Activated CD4-positive, alpha-beta T cell treated with anti-CD3 and anti-CD28 coated beads, Interleukin-2, amount 10 ng/mL, durations not matched to agents 24 days and 14 days (primary cell): ENCODE measurements at regions of chr22 and their contacts with region 1.

Region 1: GRCh38 chr22:36481393-36482168 is at the start of gene TXN2:
- DNase-seq: peak; percentile 98
- H3K4me3 Mint-ChIP-seq: peak within 1 kb of the TSS; percentile 90
- H3K27ac Mint-ChIP-seq: peak within 1 kb of the TSS; percentile 87
- H3K4me1 Mint-ChIP-seq: peaks cover 19% of the 10 kb centered on the region
- H3K27me3 Mint-ChIP-seq: no peaks in the 10 kb centered on the region
- total RNA-seq, gene TXN2: 96.5 and 98.7 TPM in 2 replicates

Region 2: DNA sequence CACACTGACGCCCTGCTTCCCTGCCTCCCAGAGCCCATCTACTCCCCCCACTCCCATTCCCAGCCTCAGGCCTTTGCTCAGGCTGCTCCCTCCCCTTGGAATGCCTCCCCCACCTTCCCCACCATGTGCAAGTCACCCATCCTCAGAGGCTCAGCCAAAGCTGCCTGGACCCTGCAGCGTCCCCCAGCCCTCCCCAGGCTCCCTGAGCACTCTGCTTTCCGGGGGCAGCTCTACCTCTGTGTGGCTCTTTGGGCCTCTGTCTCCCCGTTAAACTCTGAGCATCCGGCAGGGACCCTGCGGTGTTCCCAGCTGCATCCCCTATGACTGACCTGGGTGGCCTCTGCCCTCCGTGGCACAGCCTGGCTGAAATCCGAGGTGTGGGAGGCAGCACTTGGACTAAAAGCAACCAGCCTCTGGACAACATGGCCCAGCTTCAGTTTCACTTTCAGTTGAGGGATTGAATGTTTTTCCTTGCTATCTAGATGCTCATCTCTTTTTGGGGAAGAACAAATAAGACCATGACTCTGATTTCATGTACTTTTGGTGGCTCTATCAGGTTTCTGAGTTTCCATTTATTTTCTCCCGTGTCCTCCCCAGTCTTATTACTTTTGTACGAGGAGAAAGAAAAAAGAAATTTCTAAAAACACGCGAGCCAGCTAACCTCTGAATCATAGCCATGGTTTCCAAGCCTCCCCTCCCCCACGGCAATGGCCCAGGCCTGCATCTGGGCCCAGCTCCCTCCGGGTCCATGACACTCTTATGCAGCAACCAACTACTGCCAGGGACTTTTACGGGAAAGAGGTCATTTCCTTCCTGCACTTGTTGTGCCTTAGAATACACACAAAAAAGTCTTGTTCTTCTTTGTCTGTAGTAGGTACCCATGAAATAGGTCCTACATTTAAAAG is 324.8 kb before region 1 on chr22:
- intact Hi-C with region 1: loop called (anchors 10 kb)
- DNase-seq: peak; percentile 86
- H3K4me3 Mint-ChIP-seq: peak overlapping the region; percentile 94
- H3K27ac Mint-ChIP-seq: peak overlapping the region; percentile 99
- H3K4me1 Mint-ChIP-seq: peaks cover 81% of the 10 kb centered on the region
- H3K27me3 Mint-ChIP-seq: no peaks in the 10 kb centered on the region

Region 3: GRCh38 chr22:36239401-36240171 is 242.0 kb before region 1 on chr22 and contains the start of gene APOL2:
- intact Hi-C with region 1: loop called (anchors 5 kb)
- DNase-seq: peak; percentile 96
- H3K4me3 Mint-ChIP-seq: peak within 1 kb of the TSS; percentile 91
- H3K27ac Mint-ChIP-seq: peak within 1 kb of the TSS; percentile 94
- H3K4me1 Mint-ChIP-seq: peaks cover 40% of the 10 kb centered on the region
- H3K27me3 Mint-ChIP-seq: peaks cover 2% of the 10 kb centered on the region
- total RNA-seq, gene APOL2: 52.0 and 58.6 TPM in 2 replicates

Region 4: DNA sequence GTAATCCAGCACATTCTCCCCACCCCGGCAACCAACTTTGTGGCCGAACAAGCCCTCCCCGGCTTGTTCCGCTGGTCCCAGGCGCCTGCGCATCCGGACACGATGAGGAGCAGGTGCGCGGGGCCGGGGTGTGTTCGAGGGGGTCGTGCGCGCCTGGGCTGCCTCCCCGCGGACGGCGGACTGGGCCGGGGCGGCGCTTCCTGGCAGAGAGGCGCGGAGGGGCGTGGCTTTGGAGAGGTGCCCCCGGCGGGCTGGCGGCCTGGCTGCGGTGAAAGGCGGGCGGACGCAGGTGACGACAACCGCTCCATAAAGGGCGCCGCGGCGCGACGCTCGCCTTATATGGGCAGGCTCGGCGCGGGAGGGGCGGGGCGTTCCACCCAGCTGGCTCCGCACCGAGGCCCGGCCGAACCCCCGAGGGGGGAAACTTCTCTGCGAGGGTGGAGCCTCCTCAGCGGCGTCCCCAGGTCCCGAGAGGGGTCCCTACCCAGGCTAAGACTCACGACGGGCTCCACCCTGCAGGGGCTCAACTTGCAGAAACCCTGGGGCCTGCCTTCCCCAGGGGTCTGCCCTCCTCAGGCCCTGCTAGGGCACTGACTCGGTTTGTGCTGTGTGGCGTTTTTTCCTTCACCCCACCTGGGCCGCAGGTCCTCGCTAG is 26.5 kb before region 1 on chr22:
- intact Hi-C with region 1: loop called (anchors 2 kb)
- DNase-seq: peak; percentile 98
- H3K4me3 Mint-ChIP-seq: peak overlapping the region; percentile 71
- H3K27ac Mint-ChIP-seq: peak overlapping the region; percentile 77
- H3K4me1 Mint-ChIP-seq: peaks cover 41% of the 10 kb centered on the region
- H3K27me3 Mint-ChIP-seq: no peaks in the 10 kb centered on the region

Region 5: DNA sequence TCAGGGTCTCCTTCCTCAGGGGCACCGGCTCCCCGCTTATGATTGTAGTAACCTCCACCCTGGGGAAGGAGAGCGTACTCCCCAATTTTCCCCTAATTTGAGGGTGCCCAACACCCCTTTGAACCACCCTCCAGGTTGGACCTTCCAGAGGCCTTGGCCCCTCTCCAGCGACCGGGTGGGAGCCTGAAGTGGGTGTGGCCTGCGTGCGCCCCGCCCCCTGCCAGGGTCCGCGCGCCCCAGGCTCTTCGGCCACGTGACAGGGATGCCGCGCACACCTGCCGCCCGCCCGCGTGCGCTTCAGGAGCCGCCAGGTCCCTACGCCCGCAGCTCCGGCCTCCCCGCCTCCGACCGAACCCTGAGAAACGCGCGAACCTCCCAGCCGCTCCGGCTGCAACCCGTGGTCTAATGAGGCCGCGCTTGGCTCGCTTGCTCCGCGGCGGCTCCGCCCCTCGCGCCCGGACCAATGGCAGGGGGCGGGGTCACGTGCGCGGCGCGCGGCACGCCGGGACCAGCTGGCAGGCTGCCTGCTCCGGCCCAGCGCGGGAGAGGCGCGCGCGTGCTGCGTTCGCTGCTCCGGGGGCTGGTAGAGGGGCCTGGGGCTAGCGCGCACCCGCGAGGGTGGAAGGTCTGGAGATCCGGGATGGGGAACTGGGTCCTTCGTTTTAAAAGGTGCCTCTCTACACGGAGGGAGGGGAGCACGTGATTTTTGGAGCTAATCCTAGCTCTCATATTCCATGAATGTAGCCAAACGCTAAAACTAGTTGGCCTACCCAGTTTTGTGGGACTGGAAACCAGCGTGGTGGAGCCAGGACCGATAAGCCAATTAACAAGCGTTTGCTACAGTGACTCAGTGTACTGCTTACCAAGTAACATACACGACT is 25.3 kb after region 1 on chr22 and contains the start of gene FOXRED2:
- intact Hi-C with region 1: loop called (anchors 2 kb)
- DNase-seq: peak; percentile 98
- H3K4me3 Mint-ChIP-seq: peak within 1 kb of the TSS; percentile 70
- H3K27ac Mint-ChIP-seq: peak within 1 kb of the TSS; percentile 70
- H3K4me1 Mint-ChIP-seq: peaks cover 10% of the 10 kb centered on the region
- H3K27me3 Mint-ChIP-seq: no peaks in the 10 kb centered on the region
- total RNA-seq, gene FOXRED2: 25.4 and 26.3 TPM in 2 replicates

Region 6: DNA sequence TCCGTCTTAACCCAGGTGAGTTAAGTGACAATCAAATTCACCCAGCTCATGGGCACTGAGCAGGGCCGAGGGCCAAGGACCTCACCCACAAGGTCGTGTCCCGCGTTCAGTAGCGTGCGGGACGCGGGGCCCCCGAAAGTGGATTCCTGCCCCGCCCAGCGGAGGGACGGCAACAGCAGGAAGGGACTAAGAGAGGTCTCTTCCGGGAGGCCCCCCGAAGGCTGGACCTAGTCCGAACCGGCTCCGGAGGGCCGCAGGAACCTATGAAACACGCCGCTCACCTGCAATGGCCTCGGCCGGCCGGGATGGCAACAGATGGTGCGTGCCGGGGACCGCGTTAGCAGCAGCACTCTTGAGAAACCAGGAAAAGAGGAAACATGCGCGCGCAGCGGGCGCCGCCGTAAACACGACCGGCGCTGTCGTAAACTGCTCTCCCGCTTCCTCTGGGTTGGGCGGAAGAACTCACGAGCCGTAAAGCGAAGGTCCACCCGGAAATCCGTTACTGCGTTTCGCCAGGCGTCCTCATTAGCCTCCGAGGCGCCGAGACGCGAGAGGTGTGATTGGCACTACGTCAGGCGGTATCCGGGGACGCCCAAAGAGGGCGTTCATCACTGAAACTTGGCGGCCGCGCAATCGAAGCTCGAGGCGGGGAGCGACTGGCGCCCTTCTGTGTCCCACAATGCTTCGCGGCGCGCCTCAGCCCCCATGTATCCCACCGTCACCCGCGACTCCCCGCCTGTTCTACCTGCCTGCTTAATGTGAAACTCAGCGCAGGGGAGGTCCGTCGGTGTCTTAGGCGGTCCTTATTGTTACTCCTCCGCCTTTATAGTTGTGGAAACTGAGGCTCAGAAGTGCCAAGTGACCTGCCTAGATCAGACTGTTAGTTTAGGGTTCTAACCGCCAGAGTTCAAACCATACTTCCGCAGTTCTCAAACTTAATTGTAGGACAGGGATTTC is 47.5 kb after region 1 on chr22 and contains the start of gene EIF3D:
- intact Hi-C with region 1: loop called (anchors 1 kb)
- DNase-seq: peak; percentile 99
- H3K4me3 Mint-ChIP-seq: peak within 1 kb of the TSS; percentile 93
- H3K27ac Mint-ChIP-seq: peak within 1 kb of the TSS; percentile 99
- H3K4me1 Mint-ChIP-seq: peaks cover 19% of the 10 kb centered on the region
- H3K27me3 Mint-ChIP-seq: peaks cover 3% of the 10 kb centered on the region
- total RNA-seq, gene EIF3D: 353 and 367 TPM in 2 replicates